PC-9 (cell line): ENCODE measurements at regions of chr1 and their contacts with region 1.

Region 1: GRCh38 chr1:3491291-3492246 is 37.1 kb downstream of the ARHGEF16 start:
- DNase-seq: peak in 1 of 2 experiments; percentile 72
- H3K4me3 ChIP-seq: no peak overlapping the region
- H3K27ac ChIP-seq: no peak overlapping the region
- H3K4me1 ChIP-seq: peaks cover 20% of the 10 kb centered on the region
- H3K27me3 ChIP-seq: no peaks in the 10 kb centered on the region
- CTCF ChIP-seq: peak; percentile 99

Region 2: GRCh38 chr1:3573500-3573899 is 81.9 kb after region 1 on chr1:
- CTCF ChIA-PET with region 1: interaction called, 11 read pairs
- POLR2A ChIA-PET with region 1: no interaction called
- intact Hi-C with region 1: no loop called
- DNase-seq: no peak
- H3K4me3 ChIP-seq: no peak overlapping the region
- H3K27ac ChIP-seq: no peak overlapping the region
- H3K4me1 ChIP-seq: peaks cover 6% of the 10 kb centered on the region; the same call in 1 of the 2 replicates
- H3K27me3 ChIP-seq: no peaks in the 10 kb centered on the region
- CTCF ChIP-seq: no peak